ENCODE measurements at regions of chr1 and their contacts with region 1.

Region 1: DNA sequence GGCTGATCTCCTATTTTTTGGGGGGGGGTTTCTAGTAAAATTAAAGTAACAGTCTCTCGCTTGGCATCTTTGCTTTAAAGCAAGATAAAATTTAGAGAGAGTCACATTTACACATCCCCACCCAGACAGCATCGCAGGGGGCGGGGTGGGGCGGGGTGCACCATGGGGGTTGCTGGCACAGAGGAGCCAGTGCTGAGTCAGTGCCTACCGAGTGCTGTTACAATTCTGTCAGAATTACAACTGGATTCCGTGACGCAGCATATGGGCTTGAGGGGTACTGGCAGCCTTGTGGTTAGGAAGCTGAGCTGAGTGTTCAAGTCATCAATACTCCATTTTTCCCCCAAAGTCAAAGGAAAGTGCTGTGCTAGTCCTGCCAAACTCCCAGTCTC is 175.9 kb downstream of the PRDM16 start:
- DNase-seq: no peak
- ATAC-seq: no peak
- H3K4me3 ChIP-seq: no peak overlapping the region
- H3K27ac ChIP-seq: no peak overlapping the region
- H3K4me1 ChIP-seq: no peaks in the 10 kb centered on the region
- H3K27me3 ChIP-seq: no peaks in the 10 kb centered on the region

Region 2: GRCh38 chr1:3192825-3193224 is 52.1 kb before region 1 on chr1:
- intact Hi-C with region 1: loop called in 1 of 2 experiments (anchors 5 kb)
- DNase-seq: peak; percentile 78 to 88
- ATAC-seq: no peak
- H3K4me3 ChIP-seq: no peak overlapping the region
- H3K27ac ChIP-seq: peak overlapping the region; percentile 93 to 98
- H3K4me1 ChIP-seq: no peaks in the 10 kb centered on the region
- H3K27me3 ChIP-seq: no peaks in the 10 kb centered on the region

Region 3: GRCh38 chr1:3222042-3222692 is 22.8 kb before region 1 on chr1:
- intact Hi-C with region 1: loop called in 1 of 2 experiments (anchors 2 kb)
- DNase-seq: peak in 1 of 2 donors; percentile 62
- ATAC-seq: no peak
- H3K4me3 ChIP-seq: no peak overlapping the region
- H3K27ac ChIP-seq: peak overlapping the region in 1 of 2 donors; percentile 61
- H3K4me1 ChIP-seq: no peaks in the 10 kb centered on the region
- H3K27me3 ChIP-seq: no peaks in the 10 kb centered on the region

Region 4: GRCh38 chr1:3598051-3598491 is 353.1 kb after region 1 on chr1:
- intact Hi-C with region 1: no loop called
- DNase-seq: no peak
- ATAC-seq: peak; percentile 49
- H3K4me3 ChIP-seq: no peak overlapping the region
- H3K27ac ChIP-seq: no peak overlapping the region
- H3K4me1 ChIP-seq: no peaks in the 10 kb centered on the region
- H3K27me3 ChIP-seq: no peaks in the 10 kb centered on the region

Measured in aorta (tissue), 5 donors.